Right lobe of liver (tissue), 6 donors: ENCODE measurements at regions of chr12 and their contacts with region 1.

Region 1: DNA sequence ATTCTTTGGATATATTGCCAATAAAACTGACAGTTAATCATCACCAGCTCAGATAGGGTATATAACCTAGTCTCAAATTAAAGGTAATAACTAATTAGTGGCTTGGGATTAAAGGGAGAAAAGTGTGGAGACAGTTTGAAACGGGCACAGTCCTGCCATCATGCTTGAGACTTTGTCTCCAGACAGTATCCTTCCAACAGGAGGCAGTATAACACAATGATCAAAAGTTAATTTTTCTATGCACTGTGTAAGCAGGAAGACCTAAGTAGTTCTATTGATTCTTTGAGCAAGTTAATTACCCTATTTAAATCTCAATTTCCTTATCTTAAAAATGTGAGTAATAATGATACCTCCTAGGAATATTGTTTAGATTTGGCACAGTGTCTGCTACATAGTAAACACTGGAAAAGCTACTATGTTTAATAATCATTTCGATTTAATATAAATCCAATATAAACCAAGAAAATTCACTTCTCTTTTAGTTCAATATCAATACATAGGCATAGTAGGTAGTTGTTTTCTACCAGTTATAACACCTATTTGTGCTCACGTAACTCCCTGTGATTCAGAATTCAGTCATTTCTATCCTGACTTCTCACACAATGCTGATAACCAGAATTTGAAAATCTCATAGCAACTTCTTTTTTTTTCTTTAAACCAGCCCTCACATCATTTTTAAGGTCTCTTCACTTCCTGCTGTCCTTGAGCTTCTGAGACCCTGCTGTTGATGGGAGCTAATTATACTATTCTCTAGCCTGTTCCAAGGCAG is 53.7 kb downstream of the GALNT4 start:
- DNase-seq: no peak
- ATAC-seq: peak; percentile 91 to 97 (median 94)
- H3K4me3 ChIP-seq: no peak overlapping the region
- H3K27ac ChIP-seq: no peak overlapping the region
- H3K4me1 ChIP-seq: no peaks in the 10 kb centered on the region
- H3K27me3 ChIP-seq: no peaks in the 10 kb centered on the region
- CTCF ChIP-seq: peak; percentile 71 to 77 (median 76)
- POLR2A ChIP-seq: no peak

Region 2: GRCh38 chr12:89200217-89200616 is 270.7 kb before region 1 on chr12:
- intact Hi-C with region 1: no loop called
- DNase-seq: no peak
- ATAC-seq: no peak
- H3K4me3 ChIP-seq: no peak overlapping the region
- H3K27ac ChIP-seq: no peak overlapping the region
- H3K4me1 ChIP-seq: peaks cover 0 to 7% (median 3%) of the 10 kb centered on the region in 4 donors
- H3K27me3 ChIP-seq: no peaks in the 10 kb centered on the region
- CTCF ChIP-seq: no peak
- POLR2A ChIP-seq: no peak

Region 3: GRCh38 chr12:89524541-89525285 is 53.8 kb after region 1 on chr12 and contains the start of gene GALNT4:
- intact Hi-C with region 1: loop called in 1 of 2 experiments (anchors 10 kb)
- DNase-seq: peak; percentile 90 to 93 (median 92)
- ATAC-seq: peak; percentile 88 to 93 (median 90)
- H3K4me3 ChIP-seq: peak within 1 kb of the TSS; percentile 87 to 95 (median 89)
- H3K27ac ChIP-seq: peak within 1 kb of the TSS; percentile 81 to 91 (median 82)
- H3K4me1 ChIP-seq: peaks cover 0 to 31% (median 12%) of the 10 kb centered on the region in 4 donors
- H3K27me3 ChIP-seq: no peaks in the 10 kb centered on the region
- CTCF ChIP-seq: peak; percentile 57 to 71 (median 58)
- POLR2A ChIP-seq: peak; percentile 68
- total RNA-seq, gene GALNT4: 2.5 to 6.2 (median 4.1) TPM